ENCODE measurements at regions of chr2 and their contacts with region 1.

Region 1: DNA sequence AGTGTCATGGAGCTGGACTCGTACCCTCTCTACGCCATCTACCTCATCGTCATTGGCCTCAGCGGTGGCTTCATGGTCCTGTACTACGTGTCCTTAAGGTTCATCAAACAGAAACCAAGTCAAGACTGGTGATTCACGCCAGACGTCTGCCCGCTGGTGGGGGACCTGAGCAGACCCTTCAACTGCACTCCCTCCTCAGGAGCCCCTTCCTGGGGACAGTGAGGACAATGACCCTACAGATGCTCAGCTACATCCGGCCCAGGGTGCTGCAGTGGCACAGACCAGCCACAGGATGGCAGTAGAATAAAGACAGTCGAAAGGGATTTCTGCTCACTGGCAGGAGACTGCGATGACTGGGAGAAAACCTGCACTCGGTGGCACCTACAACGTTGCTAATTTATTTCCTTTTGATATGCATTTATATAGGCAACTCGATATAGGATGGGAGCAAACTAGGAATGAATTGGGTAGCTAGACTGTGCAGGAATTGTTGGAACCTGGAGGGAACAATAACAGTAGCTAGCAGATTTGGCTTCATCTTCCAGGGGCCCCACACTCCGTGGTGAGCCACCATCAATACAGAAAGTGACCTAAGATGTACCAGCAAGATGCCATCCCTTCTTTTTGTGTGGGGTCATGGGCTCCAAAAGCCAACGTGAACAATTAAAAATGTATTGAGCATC is 39.2 kb downstream of the ABCG8 start:
- DNase-seq: peak; percentile 87
- H3K4me3 ChIP-seq: peak overlapping the region in 1 of 2 experiments; percentile 38; a peak in 1 of 4 replicates
- H3K27ac ChIP-seq: no peak overlapping the region
- H3K4me1 ChIP-seq: peaks cover 0 to 7% of the 10 kb centered on the region in 2 experiments; a peak in 1 of 4 replicates
- H3K27me3 ChIP-seq: no peaks in the 10 kb centered on the region; the same call in 1 of the 2 replicates
- CTCF ChIP-seq: peak; percentile 98
- EP300 ChIP-seq: no peak
- RAD21 ChIP-seq: peak; percentile 96

Region 2: GRCh38 chr2:43714164-43714563 is 163.8 kb before region 1 on chr2:
- CTCF ChIA-PET with region 1: no interaction called
- POLR2A ChIA-PET with region 1: no interaction called
- DNase-seq: no peak
- H3K4me3 ChIP-seq: no peak overlapping the region
- H3K27ac ChIP-seq: no peak overlapping the region
- H3K4me1 ChIP-seq: peaks cover 0 to 9% of the 10 kb centered on the region in 2 experiments; a peak in 1 of 4 replicates
- H3K27me3 ChIP-seq: no peaks in the 10 kb centered on the region
- CTCF ChIP-seq: no peak
- EP300 ChIP-seq: no peak
- RAD21 ChIP-seq: no peak

Region 3: GRCh38 chr2:43890855-43891254 is 12.9 kb after region 1 on chr2:
- CTCF ChIA-PET with region 1: interaction called, 42 read pairs
- POLR2A ChIA-PET with region 1: no interaction called
- DNase-seq: no peak
- H3K4me3 ChIP-seq: no peak overlapping the region
- H3K27ac ChIP-seq: no peak overlapping the region
- H3K4me1 ChIP-seq: no peaks in the 10 kb centered on the region
- H3K27me3 ChIP-seq: no peaks in the 10 kb centered on the region
- CTCF ChIP-seq: no peak
- EP300 ChIP-seq: no peak
- RAD21 ChIP-seq: no peak

Region 4: DNA sequence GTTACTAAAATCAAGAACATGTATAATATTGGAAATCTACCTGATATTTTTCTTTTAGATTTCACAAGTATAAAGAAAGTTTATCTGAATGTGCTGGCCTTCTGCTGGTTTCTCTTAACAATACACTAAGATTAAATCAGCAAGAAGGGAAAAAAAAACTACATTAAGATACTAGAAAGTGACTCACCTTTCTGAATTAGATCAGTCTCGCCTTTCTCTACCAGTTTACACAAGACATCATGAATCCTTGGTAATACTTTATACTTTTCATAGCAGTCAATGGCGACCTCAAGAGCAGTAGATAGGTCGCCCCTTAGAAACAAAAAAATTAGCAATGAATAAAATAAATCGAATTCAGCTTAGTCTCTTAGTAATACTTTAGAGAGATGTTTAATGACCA is 56.6 kb after region 1 on chr2:
- CTCF ChIA-PET with region 1: interaction called, 77 read pairs
- POLR2A ChIA-PET with region 1: no interaction called
- DNase-seq: no peak
- H3K4me3 ChIP-seq: no peak overlapping the region
- H3K27ac ChIP-seq: no peak overlapping the region; a peak in 1 of 4 replicates
- H3K4me1 ChIP-seq: peaks cover 3 to 5% of the 10 kb centered on the region in 2 experiments; a peak in 3 of 4 replicates
- H3K27me3 ChIP-seq: no peaks in the 10 kb centered on the region
- CTCF ChIP-seq: no peak
- EP300 ChIP-seq: no peak
- RAD21 ChIP-seq: no peak

Region 5: DNA sequence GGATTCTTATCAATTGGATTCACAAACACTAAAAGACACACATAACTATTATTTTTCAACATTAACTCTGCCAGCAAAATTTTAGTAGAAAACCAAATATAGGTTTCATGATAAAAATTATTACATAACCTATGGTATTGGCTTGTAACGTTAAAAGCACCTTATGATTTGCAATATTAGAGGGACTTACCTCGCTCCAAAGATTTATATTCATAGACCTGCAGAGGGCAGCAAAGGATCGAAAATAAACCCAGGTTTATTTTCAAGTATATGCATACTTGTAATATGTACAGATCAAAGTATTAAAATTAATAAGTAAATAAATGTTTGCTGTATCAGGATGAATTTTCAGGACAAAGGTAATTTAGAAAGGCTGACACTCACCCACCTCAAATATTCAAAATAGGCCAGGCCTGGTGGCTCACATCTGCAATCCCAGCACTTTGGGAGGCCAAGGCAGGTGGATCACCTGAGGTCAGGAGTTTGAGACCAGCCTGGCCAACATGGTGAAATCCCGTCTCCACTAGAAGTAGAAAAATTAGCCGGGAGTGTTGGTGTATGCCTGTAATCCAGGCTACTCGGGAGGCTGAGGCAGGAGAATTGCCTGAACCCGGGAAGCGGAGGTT is 72.6 kb after region 1 on chr2:
- CTCF ChIA-PET with region 1: interaction called, 77 read pairs
- POLR2A ChIA-PET with region 1: no interaction called
- DNase-seq: peak; percentile 37
- H3K4me3 ChIP-seq: no peak overlapping the region
- H3K27ac ChIP-seq: no peak overlapping the region
- H3K4me1 ChIP-seq: no peaks in the 10 kb centered on the region; a peak in 1 of 4 replicates
- H3K27me3 ChIP-seq: no peaks in the 10 kb centered on the region
- CTCF ChIP-seq: peak; percentile 76
- EP300 ChIP-seq: no peak
- RAD21 ChIP-seq: peak; percentile 68

Region 6: DNA sequence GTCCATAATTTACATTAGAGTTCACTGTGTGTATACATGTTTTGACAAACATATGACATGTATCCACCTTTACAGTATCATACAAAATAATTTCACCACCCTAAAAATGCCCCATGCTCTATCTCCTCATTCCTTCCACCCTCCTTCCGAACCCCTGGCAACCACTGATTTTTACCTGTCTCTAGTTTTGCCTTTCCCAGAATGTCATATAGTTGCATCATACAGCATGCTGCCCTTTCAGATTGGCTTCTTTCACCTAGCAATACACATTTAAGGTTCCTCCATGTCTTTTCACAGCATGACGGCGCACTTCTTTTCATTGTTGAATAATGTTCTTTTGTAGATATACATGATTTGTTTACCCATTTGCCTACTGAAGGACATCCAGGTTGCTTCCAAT is 107.4 kb after region 1 on chr2:
- CTCF ChIA-PET with region 1: interaction called, 10 read pairs
- POLR2A ChIA-PET with region 1: no interaction called
- DNase-seq: no peak
- H3K4me3 ChIP-seq: no peak overlapping the region
- H3K27ac ChIP-seq: no peak overlapping the region
- H3K4me1 ChIP-seq: no peaks in the 10 kb centered on the region
- H3K27me3 ChIP-seq: no peaks in the 10 kb centered on the region
- CTCF ChIP-seq: no peak
- EP300 ChIP-seq: no peak
- RAD21 ChIP-seq: no peak

Region 7: GRCh38 chr2:44549095-44549463 is 671.2 kb after region 1 on chr2:
- CTCF ChIA-PET with region 1: no interaction called
- POLR2A ChIA-PET with region 1: no interaction called
- DNase-seq: no peak
- H3K4me3 ChIP-seq: peak overlapping the region; percentile 5 to 18; a peak in 2 of 4 replicates
- H3K27ac ChIP-seq: peak overlapping the region; percentile 75 to 92; a peak in 3 of 4 replicates
- H3K4me1 ChIP-seq: peaks cover 46 to 47% of the 10 kb centered on the region in 2 experiments
- H3K27me3 ChIP-seq: no peaks in the 10 kb centered on the region
- CTCF ChIP-seq: no peak
- EP300 ChIP-seq: peak; percentile 30 to 85; a peak in 3 of 4 replicates
- RAD21 ChIP-seq: no peak